Right cardiac atrium (tissue), 5 donors: ENCODE measurements at regions of chr11 and their contacts with region 1.

Region 1: DNA sequence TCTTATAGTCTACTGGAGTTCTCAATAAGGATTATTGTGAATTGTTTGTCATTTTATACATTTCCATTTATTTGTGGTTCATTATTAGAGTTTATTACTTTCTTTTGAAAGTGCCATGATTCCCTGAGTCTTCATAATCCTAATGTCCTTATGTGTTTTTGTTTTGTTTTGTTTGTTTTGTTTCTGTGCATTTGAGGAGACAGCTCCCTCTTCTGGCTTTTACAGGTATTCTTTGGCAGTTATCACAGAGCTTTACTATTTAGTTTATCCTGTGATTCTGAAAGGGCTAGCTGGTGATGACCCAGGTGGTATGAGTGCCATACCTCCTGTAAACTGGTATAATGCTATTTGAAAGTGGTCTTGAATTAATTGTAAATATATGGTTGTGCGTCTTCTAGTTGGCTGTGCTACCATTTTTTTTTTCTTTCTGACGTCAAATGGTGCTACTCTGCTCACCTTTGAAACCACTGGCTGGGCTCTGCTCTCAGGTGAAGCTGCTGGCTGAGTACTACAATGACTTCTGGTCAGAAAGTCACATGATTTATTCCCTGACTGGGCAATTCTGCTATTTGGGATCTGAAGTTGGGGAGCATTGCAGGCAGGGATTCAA is 751.2 kb downstream of the JRKL start:
- DNase-seq: no peak
- ATAC-seq: no peak
- H3K4me3 ChIP-seq: no peak overlapping the region
- H3K27ac ChIP-seq: no peak overlapping the region
- H3K4me1 ChIP-seq: no peaks in the 10 kb centered on the region
- H3K27me3 ChIP-seq: no peaks in the 10 kb centered on the region

Region 2: GRCh38 chr11:96464700-96465307 is 676.2 kb before region 1 on chr11:
- intact Hi-C with region 1: loop called in 1 of 4 experiments (anchors 5 kb)
- DNase-seq: no peak
- ATAC-seq: peak; percentile 95 to 96
- H3K4me3 ChIP-seq: peak overlapping the region; percentile 34
- H3K27ac ChIP-seq: no peak overlapping the region
- H3K4me1 ChIP-seq: no peaks in the 10 kb centered on the region
- H3K27me3 ChIP-seq: no peaks in the 10 kb centered on the region

Region 3: DNA sequence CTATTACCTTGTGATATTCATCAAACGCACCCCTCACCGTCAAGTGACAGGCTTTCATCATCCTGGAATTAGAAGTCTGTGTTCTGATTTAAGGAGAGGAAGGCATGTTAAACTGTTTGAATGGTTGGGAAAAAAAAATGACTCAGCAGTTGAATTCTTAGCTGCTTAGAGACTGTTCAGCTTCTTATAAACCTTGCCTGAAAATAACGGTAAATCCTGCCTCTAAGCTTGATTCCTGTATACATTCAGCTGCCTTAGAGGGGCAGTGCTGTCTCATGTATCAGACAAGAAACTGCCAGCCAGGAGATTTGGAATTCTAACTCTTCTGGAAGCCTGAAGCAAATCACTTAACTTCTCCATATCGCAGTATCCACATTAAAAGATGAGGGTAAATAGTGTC is 313.8 kb before region 1 on chr11:
- intact Hi-C with region 1: loop called in 1 of 4 experiments (anchors 10 kb)
- DNase-seq: no peak
- ATAC-seq: peak in 1 of 2 donors; percentile 43
- H3K4me3 ChIP-seq: no peak overlapping the region
- H3K27ac ChIP-seq: no peak overlapping the region
- H3K4me1 ChIP-seq: no peaks in the 10 kb centered on the region
- H3K27me3 ChIP-seq: no peaks in the 10 kb centered on the region

Region 4: GRCh38 chr11:97489241-97489640 is 348.3 kb after region 1 on chr11:
- intact Hi-C with region 1: no loop called
- DNase-seq: peak in 1 of 3 donors; percentile 6
- ATAC-seq: no peak
- H3K4me3 ChIP-seq: no peak overlapping the region
- H3K27ac ChIP-seq: no peak overlapping the region
- H3K4me1 ChIP-seq: no peaks in the 10 kb centered on the region
- H3K27me3 ChIP-seq: no peaks in the 10 kb centered on the region